ENCODE measurements at regions of chr1 and their contacts with region 1.

Region 1: DNA sequence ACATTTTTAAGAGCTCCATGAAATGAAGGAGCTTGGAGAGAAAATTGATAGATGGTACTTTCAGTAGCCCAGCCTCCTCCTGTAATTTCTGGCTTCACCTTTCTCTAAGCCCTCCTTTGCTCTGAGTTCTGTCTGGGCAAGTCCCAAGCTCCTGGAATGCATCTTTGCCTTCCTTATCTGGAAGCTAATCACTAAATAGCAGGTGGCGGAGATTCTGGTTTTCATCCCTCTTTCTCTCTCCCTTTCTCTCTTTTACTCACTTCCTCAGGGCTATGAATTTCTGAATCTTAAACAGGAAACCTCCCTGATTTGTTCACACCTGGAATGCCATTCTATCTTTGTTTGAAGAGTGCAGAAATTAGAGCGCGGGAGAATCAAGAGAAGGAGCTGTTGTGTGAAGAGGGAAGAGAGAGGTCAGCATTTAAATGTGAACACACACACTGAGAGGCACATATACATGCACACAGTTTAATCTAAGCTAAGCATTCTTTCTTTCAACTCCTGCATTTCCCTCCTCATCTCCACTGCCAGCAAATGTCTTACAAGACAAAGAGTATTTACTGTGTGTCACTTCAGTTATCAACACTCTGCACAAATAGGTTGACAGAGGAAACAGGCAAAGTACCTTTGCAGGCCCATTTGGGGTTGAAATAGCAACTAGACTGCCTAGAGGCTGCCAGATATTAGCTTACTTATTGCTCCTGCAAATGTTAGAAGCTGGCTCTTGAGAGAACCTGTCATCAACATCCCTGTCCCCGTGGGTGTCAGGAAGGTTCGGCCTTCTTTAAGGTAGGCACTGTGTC is 199.4 kb upstream of the CAMK1G start:
- DNase-seq: peak; percentile 72
- H3K4me3 Mint-ChIP-seq: peak overlapping the region; percentile 15
- H3K27ac Mint-ChIP-seq: peak overlapping the region; percentile 81
- H3K4me1 Mint-ChIP-seq: peaks cover 65% of the 10 kb centered on the region
- H3K27me3 Mint-ChIP-seq: no peaks in the 10 kb centered on the region
- CTCF ChIP-seq: no peak

Region 2: DNA sequence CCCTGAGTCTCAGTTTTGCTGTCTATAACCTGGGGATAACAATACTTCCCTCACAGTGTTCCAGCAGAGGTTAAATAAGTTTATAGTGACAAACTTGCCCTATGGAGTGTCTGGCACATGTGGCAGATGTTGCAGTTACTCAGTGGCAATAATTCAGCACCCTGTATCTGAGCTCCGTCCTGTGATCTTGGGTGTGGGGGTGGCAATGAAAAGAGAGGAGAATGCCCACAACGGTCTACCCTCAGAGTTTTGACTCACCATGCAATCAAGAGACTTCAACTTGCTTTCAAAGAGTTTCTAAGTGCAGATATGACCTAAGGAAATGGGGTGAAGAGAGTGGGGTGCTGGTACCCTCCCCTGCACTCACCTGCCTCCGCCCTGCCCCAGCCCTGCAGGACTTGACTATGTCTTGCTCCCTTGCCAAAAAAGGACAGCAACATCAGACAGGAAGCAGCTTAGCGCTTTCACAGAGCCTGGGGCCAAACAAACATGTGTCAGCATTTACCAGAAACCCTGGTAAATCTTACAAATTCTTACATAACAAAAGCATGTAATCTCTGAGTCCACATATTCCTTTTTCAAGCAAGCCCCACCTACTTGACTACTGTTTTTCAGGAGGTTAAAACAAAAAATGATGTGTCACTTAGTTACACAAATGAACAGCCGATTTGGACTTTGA is 14.3 kb after region 1 on chr1:
- CTCF ChIA-PET with region 1: interaction called, 65 read pairs
- POLR2A ChIA-PET with region 1: interaction called, 6,956 read pairs
- intact Hi-C with region 1: loop called (anchors 1 kb)
- DNase-seq: peak; percentile 100
- H3K4me3 Mint-ChIP-seq: peak overlapping the region; percentile 29
- H3K27ac Mint-ChIP-seq: peak overlapping the region; percentile 79
- H3K4me1 Mint-ChIP-seq: peaks cover 28% of the 10 kb centered on the region
- H3K27me3 Mint-ChIP-seq: no peaks in the 10 kb centered on the region
- CTCF ChIP-seq: no peak

Region 3: GRCh38 chr1:209443971-209444651 is 60.0 kb after region 1 on chr1:
- CTCF ChIA-PET with region 1: interaction called, 1,242 read pairs
- POLR2A ChIA-PET with region 1: interaction called, 6,956 read pairs
- intact Hi-C with region 1: no loop called
- DNase-seq: peak; percentile 54
- H3K4me3 Mint-ChIP-seq: no peak overlapping the region
- H3K27ac Mint-ChIP-seq: peak overlapping the region; percentile 17
- H3K4me1 Mint-ChIP-seq: peaks cover 24% of the 10 kb centered on the region
- H3K27me3 Mint-ChIP-seq: no peaks in the 10 kb centered on the region
- CTCF ChIP-seq: no peak

Region 4: GRCh38 chr1:209513226-209513625 is 129.1 kb after region 1 on chr1:
- CTCF ChIA-PET with region 1: no interaction called
- POLR2A ChIA-PET with region 1: no interaction called
- intact Hi-C with region 1: no loop called
- DNase-seq: peak; percentile 84
- H3K4me3 Mint-ChIP-seq: no peak overlapping the region
- H3K27ac Mint-ChIP-seq: no peak overlapping the region
- H3K4me1 Mint-ChIP-seq: peaks cover 11% of the 10 kb centered on the region
- H3K27me3 Mint-ChIP-seq: no peaks in the 10 kb centered on the region
- CTCF ChIP-seq: peak; percentile 93

Region 5: DNA sequence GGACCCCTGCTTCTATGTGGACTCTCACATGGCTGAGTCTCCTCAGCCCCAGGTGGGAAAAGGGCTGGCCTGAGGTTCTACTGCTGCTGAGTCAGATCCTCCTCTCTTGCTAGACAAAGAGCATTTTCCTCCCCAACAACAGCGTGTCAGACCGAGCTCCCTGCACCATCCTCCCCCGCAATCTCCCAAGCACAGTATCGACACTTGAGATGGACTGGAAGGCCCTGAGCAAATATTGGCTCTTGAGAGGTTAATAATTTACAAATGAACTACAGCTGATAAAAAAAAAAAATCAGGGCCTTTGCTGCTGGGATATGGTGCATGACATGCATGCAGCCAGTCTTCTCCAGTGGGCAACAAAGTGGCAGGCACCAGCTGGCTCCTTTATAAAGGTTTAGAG is 143.9 kb after region 1 on chr1:
- CTCF ChIA-PET with region 1: no interaction called
- POLR2A ChIA-PET with region 1: interaction called, 16 read pairs
- intact Hi-C with region 1: no loop called
- DNase-seq: peak; percentile 36
- H3K4me3 Mint-ChIP-seq: no peak overlapping the region
- H3K27ac Mint-ChIP-seq: peak overlapping the region; percentile 60
- H3K4me1 Mint-ChIP-seq: peaks cover 64% of the 10 kb centered on the region
- H3K27me3 Mint-ChIP-seq: no peaks in the 10 kb centered on the region
- CTCF ChIP-seq: no peak